Left cardiac atrium (tissue), 4 donors: ENCODE measurements at regions of chr7 and their contacts with region 1.

Region 1: DNA sequence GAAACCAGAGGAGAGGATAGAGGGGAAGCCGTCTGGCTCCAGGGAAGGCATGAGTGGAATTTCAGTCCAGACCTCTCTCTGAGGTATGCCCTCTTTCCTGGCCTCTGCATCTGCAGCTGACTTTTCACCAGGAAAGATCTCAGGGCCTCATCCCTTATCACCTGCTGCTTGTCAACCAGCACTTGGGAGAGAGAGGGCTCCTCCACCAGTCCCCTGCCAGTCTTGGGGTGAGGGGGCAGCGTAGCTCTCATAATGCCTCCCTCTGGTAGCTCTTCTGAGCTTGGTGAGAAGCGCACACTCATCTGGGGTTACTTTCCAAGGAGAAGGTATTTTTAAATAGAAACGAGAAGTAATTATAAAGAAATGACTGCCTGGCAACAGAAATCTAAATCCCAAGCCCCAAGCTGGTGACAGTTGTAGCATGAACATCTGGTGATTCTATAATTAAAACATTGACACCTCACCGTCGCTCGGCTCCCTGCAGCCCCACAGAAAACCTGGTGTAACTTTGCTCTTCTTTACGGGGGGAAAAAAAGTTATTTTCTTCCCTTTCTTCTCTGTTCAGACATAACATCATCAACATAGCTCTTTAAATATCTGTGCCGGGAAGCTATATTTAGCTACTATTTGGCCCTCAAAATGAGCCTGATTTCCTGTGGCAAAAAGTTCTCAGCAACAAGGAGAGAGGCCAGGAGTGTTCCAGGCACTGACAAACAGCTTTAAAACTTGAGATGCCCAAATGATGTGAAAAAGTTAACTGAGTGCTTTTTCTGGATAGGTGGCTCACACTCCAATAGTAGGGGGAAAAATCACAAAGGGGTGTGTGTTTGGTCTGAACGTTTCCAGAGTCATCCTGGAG is 26.9 kb downstream of the HIP1 start:
- DNase-seq: no peak
- ATAC-seq: peak; percentile 77 to 83

Region 2: GRCh38 chr7:75650681-75651080 is 61.2 kb before region 1 on chr7:
- intact Hi-C with region 1: loop called in 1 of 2 experiments (anchors 10 kb)
- DNase-seq: peak; percentile 78
- ATAC-seq: peak; percentile 70 to 84